Ovary (tissue), 10 donors: ENCODE measurements at regions of chr6 and their contacts with region 1.

Region 1: DNA sequence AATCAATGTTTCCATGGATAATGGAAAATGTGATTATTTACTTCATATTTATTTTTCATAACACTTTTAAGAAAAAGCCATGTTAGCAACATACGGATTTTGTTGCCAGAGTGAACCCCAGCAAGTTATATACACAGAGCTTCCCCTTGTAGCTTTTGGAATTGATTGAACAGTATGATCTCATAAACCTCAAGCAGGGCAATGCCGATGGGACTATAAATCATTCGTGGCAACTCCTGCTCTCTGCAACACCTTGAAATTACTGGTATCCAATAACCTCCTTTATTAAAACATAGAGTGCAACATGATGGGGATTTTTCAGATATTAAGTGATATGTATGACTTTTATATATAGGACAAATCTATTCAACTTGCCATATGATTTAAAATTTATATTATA is 428.5 kb downstream of the KHDRBS2 start:
- DNase-seq: no peak
- H3K4me3 ChIP-seq: no peak overlapping the region
- H3K27ac ChIP-seq: no peak overlapping the region
- H3K4me1 ChIP-seq: no peaks in the 10 kb centered on the region
- H3K27me3 ChIP-seq: no peaks in the 10 kb centered on the region
- CTCF ChIP-seq: no peak
- EP300 ChIP-seq: no peak
- POLR2A ChIP-seq: no peak

Region 2: DNA sequence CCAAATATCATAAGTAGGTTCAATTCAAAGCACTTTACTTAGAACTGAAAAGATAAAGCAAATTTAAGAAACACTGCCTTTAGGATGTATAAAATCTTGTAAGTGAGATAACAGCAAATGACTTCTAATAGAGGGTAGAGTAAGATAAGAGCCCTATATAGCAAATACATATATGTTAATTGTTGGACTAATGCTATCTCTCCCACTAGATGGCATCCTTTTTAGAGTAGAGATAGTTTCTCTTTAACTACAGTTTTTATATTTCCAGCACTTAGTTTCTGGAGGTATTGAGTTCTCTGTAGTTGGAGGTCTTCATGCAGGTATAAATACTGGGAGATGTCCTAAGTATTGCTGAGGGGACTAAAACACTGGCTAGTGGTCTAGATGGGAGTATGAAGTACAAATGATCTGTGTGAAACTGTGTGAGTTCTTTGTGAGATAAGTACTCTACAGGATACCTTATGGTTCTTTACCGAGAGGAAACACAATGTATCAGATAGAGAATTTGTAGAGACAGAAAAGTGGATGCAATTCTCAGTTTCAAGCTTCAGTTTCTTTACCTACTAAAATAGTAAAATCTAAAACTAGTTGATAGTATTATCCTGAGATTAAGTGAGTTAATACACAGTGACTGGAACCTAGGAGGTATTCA is 29.2 kb after region 1 on chr6:
- intact Hi-C with region 1: loop called in 1 of 4 experiments (anchors 2 kb)
- DNase-seq: no peak
- H3K4me3 ChIP-seq: no peak overlapping the region
- H3K27ac ChIP-seq: no peak overlapping the region
- H3K4me1 ChIP-seq: no peaks in the 10 kb centered on the region
- H3K27me3 ChIP-seq: no peaks in the 10 kb centered on the region
- CTCF ChIP-seq: no peak
- EP300 ChIP-seq: no peak
- POLR2A ChIP-seq: no peak